Spleen (tissue), 13 donors: ENCODE measurements at regions of chr19 and their contacts with region 1.

Region 1: GRCh38 chr19:42132851-42133528 is 744 bp upstream of the POU2F2 start:
- DNase-seq: peak; percentile 96
- H3K4me3 ChIP-seq: peak overlapping the region; percentile 54 to 90 (median 56)
- H3K27ac ChIP-seq: peak overlapping the region; percentile 32 to 92 (median 76)
- H3K4me1 ChIP-seq: peaks cover 12 to 86% (median 49%) of the 10 kb centered on the region in 6 donors
- H3K27me3 ChIP-seq: peaks cover 0 to 30% (median 5%) of the 10 kb centered on the region in 7 donors
- CTCF ChIP-seq: peak; percentile 95 to 100 (median 98)
- POLR2A ChIP-seq: peak in 1 of 3 donors; percentile 19

Region 2: GRCh38 chr19:42184401-42184861 is 51.4 kb after region 1 on chr19:
- intact Hi-C with region 1: loop called (anchors 10 kb)
- DNase-seq: peak; percentile 89
- H3K4me3 ChIP-seq: no peak overlapping the region
- H3K27ac ChIP-seq: peak overlapping the region in 6 of 8 donors; percentile 15 to 73 (median 42)
- H3K4me1 ChIP-seq: peaks cover 18 to 61% (median 35%) of the 10 kb centered on the region in 6 donors
- H3K27me3 ChIP-seq: peaks cover 0 to 18% (median 17%) of the 10 kb centered on the region in 7 donors
- CTCF ChIP-seq: peak; percentile 73 to 93 (median 89)
- POLR2A ChIP-seq: no peak

Region 3: DNA sequence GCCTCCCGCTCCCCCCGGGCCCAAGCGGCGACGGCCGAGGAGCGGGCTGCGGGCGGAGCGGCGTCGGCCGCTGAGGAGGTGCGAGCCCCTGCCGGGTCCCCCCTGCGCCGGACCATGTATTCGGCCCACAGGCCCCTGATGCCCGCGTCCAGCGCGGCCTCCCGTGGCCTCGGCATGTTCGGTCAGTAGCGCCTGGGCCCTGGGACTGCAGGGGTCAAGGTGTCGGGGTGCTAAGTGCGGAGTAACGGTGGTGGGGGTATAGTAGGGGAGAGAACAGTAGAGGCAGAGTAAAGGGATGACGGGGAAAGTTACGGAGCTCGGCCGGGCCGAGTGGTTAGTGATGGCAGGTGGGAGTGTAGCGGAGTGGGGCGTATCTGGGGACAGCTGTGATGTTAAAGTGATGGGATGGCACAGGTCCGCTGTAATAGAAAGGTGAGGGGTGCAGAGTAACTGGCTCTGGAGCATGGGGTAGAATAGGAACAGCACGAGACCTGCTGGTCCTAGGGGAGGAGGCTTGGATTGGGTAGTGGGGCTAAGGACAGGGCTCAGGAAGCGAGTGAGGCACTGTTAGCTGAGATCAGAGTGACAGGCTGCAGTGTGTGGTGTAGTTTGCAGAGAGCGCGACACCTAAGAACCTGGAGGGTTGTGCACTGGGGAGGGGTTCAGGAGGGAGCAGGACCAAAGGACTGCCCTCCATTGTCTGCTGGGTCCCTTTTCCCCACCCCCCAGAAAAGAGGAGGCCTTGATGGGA is 151.8 kb after region 1 on chr19:
- intact Hi-C with region 1: loop called (anchors 5 kb)
- DNase-seq: peak; percentile 92
- H3K4me3 ChIP-seq: peak overlapping the region; percentile 45 to 91 (median 52)
- H3K27ac ChIP-seq: peak overlapping the region; percentile 64 to 97 (median 82)
- H3K4me1 ChIP-seq: peaks cover 37 to 88% (median 62%) of the 10 kb centered on the region in 6 donors
- H3K27me3 ChIP-seq: no peaks in the 10 kb centered on the region
- CTCF ChIP-seq: no peak
- POLR2A ChIP-seq: no peak

Region 4: GRCh38 chr19:42301656-42302203 is 168.7 kb after region 1 on chr19 and contains the start of gene PRR19:
- intact Hi-C with region 1: loop called (anchors 5 kb)
- DNase-seq: no peak
- H3K4me3 ChIP-seq: peak within 1 kb of the TSS; percentile 51 to 85 (median 65)
- H3K27ac ChIP-seq: peak within 1 kb of the TSS; percentile 29 to 82 (median 74)
- H3K4me1 ChIP-seq: peaks cover 0 to 27% (median 18%) of the 10 kb centered on the region in 6 donors
- H3K27me3 ChIP-seq: no peaks in the 10 kb centered on the region
- CTCF ChIP-seq: no peak
- POLR2A ChIP-seq: no peak
- total RNA-seq, gene PRR19: 0.46 to 1.2 (median 0.60) TPM in 5 of 7 donors, not detected in the others